HAP-1 (cell line): ENCODE measurements at regions of chrX and their contacts with region 1.

Region 1: DNA sequence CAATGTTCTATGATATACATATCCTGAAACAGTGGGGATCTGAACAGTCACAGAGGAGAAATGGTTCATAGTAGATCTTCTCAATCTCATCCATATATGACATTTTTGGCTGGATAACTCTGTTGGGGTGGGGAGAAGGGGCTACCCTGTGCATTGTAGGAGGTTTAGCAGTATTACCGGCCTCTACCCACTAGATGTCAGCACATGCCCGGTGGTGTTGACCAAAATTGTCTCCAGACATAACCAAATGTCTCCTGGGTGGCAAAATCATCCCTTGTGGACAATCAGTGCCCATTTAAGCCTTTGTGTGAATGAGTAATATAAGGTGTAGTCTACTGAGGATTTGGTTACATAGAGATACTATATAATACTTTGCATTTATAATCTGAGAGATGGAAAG is 89.9 kb downstream of the PLS3 start:
- DNase-seq: peak; percentile 77 to 83
- H3K4me3 ChIP-seq: no peak overlapping the region
- H3K4me1 ChIP-seq: peaks cover 35% of the 10 kb centered on the region
- H3K27me3 ChIP-seq: no peaks in the 10 kb centered on the region

Region 2: GRCh38 chrX:115573185-115573584 is 77.7 kb before region 1 on chrX:
- in situ Hi-C with region 1: no loop called
- DNase-seq: no peak
- H3K4me3 ChIP-seq: no peak overlapping the region
- H3K4me1 ChIP-seq: peaks cover 4% of the 10 kb centered on the region
- H3K27me3 ChIP-seq: no peaks in the 10 kb centered on the region

Region 3: DNA sequence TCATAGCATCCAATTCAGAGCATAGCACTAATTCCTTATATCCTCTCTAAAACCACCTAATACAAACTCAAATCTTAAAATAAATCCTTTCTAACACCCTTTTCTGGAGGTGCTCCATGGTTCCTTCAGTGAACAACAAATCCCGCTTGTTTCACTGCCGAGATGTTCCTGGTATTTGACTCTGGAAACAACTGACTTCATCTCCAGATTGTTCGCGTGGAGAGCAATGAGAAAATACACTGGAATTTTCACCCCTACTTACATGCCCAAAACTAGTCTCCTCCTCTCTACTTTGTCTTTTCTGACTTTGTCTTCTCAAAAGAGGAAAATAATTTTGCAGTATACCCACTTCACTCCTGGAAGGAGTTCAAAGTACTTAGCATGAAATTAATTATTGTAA is 39.0 kb after region 1 on chrX:
- in situ Hi-C with region 1: loop called (anchors 5 kb)
- DNase-seq: peak in 1 of 2 experiments; percentile 47
- H3K4me3 ChIP-seq: no peak overlapping the region
- H3K4me1 ChIP-seq: peaks cover 45% of the 10 kb centered on the region
- H3K27me3 ChIP-seq: no peaks in the 10 kb centered on the region

Region 4: GRCh38 chrX:116239944-116240840 is 589.3 kb after region 1 on chrX:
- in situ Hi-C with region 1: no loop called
- DNase-seq: no peak
- H3K4me3 ChIP-seq: no peak overlapping the region
- H3K4me1 ChIP-seq: no peaks in the 10 kb centered on the region
- H3K27me3 ChIP-seq: no peaks in the 10 kb centered on the region; the same call in 1 of the 2 replicates